ENCODE measurements at regions of chr15 and their contacts with region 1.

Region 1: GRCh38 chr15:100341662-100342560 is at the start of gene ADAMTS17:
- DNase-seq: peak; percentile 87 to 91
- H3K4me3 ChIP-seq: peak within 1 kb of the TSS; percentile 32 to 82 (median 46)
- H3K27ac ChIP-seq: no peak within 1 kb of the TSS
- H3K4me1 ChIP-seq: peaks cover 0 to 6% (median 4%) of the 10 kb centered on the region in 4 experiments; a peak in 6 of 7 replicates
- H3K27me3 ChIP-seq: peaks cover 17 to 30% (median 26%) of the 10 kb centered on the region in 4 experiments
- CTCF ChIP-seq: peak; percentile 77 to 85 (median 82)
- EP300 ChIP-seq: peak in 1 of 2 experiments; percentile 23; a peak in 1 of 3 replicates
- POLR2A ChIP-seq: peak in 1 of 2 experiments; percentile 27; a peak in 1 of 3 replicates
- RAD21 ChIP-seq: peak; percentile 62 to 70
- total RNA-seq, gene ADAMTS17: 1.7 and 1.9 TPM in 2 replicates

Region 2: DNA sequence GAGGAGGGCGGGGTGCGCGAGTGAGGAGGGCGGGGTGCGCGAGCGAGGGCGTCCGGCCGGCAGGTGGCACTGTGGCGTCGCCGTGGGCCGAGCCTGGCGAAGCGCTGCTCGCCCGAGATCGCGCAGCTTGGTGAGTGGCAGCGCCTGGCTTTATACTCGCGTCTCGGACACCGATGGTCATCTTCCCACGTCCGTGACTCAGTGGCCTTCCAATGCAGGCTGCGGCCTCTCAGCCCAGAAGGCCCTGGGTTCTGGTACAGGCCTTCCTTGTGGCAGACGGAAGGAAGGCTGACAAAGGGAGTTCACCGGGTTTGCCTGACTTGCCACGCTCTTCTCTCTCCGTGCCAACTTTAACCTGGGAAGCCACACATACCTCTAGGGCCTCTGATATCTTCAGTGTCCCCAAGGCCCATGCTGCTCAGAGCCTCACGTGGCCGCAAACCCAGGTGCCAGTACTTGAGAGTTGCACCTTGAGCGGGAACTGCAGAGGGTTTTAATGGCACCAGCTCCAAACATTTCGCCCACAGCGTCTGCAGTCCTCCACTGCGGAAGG is 413.4 kb before region 1 on chr15:
- CTCF ChIA-PET with region 1: interaction called, 13 read pairs
- POLR2A ChIA-PET with region 1: interaction called, 9 read pairs
- DNase-seq: peak in 1 of 2 experiments; percentile 80
- H3K4me3 ChIP-seq: peak overlapping the region; percentile 51 to 80 (median 76)
- H3K27ac ChIP-seq: peak overlapping the region; percentile 45; the same call in 1 of the 2 replicates
- H3K4me1 ChIP-seq: peaks cover 5 to 13% (median 10%) of the 10 kb centered on the region in 4 experiments; a peak in 6 of 7 replicates
- H3K27me3 ChIP-seq: peaks cover 1 to 11% (median 8%) of the 10 kb centered on the region in 4 experiments; a peak in 6 of 7 replicates
- CTCF ChIP-seq: peak; percentile 34 to 76 (median 60); a peak in 3 of 4 replicates
- EP300 ChIP-seq: no peak
- POLR2A ChIP-seq: no peak
- RAD21 ChIP-seq: peak; percentile 56 to 68

Region 3: DNA sequence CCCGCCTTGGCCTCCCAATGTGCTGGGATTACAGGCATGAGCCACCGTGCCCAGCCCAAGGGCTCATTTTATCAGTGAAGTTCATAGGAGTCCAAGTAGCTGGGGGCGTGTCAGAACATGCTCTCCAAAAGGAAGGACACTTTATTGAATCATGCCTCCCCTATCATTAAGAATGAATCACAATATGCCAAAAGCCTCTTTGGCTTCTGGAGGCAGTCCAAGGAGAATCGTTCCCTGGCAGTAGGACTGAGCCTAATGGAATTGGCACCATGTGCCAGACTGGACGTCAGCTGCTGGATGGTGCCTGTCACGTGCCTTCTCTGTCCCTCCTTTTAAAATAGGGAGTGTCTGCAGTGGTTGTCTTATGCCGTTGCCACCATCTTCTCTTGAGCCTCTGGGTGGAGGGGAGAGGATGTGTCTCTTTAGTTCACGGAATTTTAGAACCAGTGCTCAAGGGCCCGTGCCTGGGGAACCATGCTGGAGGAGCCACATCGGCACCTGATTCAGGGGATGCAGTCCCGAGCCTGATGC is 374.0 kb before region 1 on chr15:
- CTCF ChIA-PET with region 1: interaction called, 14 read pairs
- POLR2A ChIA-PET with region 1: no interaction called
- DNase-seq: no peak
- H3K4me3 ChIP-seq: no peak overlapping the region
- H3K27ac ChIP-seq: no peak overlapping the region
- H3K4me1 ChIP-seq: no peaks in the 10 kb centered on the region; a peak in 1 of 7 replicates
- H3K27me3 ChIP-seq: no peaks in the 10 kb centered on the region
- CTCF ChIP-seq: no peak
- EP300 ChIP-seq: no peak
- POLR2A ChIP-seq: no peak
- RAD21 ChIP-seq: no peak

Region 4: DNA sequence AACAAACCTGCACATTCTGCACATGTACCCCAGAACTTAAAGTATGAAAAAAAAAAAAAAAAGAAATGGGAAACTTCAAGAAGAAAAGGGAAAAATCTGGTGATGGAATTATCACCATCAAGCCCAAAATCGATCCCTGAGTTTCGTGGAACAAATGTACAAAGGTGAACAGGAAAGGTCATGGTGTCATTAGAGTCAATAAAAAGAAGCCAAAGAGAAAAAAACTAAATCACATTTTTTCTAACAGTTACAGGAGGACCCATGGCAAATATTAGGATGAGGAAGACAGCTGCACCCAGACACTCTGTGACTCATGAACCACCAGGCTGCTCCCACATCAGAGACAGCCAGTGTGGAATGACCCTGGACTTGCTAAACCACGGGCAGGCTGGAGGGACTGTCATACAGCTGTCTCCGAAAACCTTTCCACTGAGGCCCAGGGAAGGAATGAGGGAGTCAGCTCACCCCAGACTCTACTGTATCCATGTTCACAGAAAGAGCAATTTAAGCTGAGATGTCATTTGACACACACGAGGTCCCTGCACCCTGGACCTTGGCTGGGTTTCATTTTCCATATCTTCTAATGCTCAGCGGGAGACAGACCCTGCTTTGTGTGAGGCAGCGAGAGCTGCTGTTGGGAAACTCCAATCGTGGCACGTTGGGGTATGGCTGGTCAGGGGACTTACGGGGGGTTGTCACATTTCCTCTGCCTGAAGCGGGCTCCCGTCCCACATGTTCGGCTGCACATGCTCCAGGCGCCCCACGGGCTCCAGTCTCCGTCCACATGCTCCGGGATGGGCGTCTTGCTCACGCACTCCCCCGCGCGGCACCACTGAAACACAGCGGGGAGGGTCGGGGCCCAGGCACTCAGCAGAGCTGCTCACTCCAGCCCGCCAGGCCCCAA is 210.3 kb before region 1 on chr15:
- CTCF ChIA-PET with region 1: interaction called, 43 read pairs
- POLR2A ChIA-PET with region 1: no interaction called
- DNase-seq: no peak
- H3K4me3 ChIP-seq: no peak overlapping the region
- H3K27ac ChIP-seq: no peak overlapping the region
- H3K4me1 ChIP-seq: no peaks in the 10 kb centered on the region
- H3K27me3 ChIP-seq: no peaks in the 10 kb centered on the region
- CTCF ChIP-seq: peak; percentile 10 to 17 (median 14); a peak in 3 of 4 replicates
- EP300 ChIP-seq: no peak
- POLR2A ChIP-seq: no peak
- RAD21 ChIP-seq: peak; percentile 33 to 50; a peak in 3 of 4 replicates

Region 5: GRCh38 chr15:100330629-100331215 is 11.2 kb before region 1 on chr15:
- CTCF ChIA-PET with region 1: interaction called, 112 read pairs
- POLR2A ChIA-PET with region 1: no interaction called
- DNase-seq: no peak
- H3K4me3 ChIP-seq: no peak overlapping the region
- H3K27ac ChIP-seq: no peak overlapping the region
- H3K4me1 ChIP-seq: peaks cover 0 to 6% (median 1%) of the 10 kb centered on the region in 4 experiments; a peak in 3 of 7 replicates
- H3K27me3 ChIP-seq: peaks cover 0 to 3% (median 0%) of the 10 kb centered on the region in 4 experiments; a peak in 1 of 7 replicates
- CTCF ChIP-seq: no peak
- EP300 ChIP-seq: no peak
- POLR2A ChIP-seq: no peak
- RAD21 ChIP-seq: no peak